Gastrocnemius medialis (tissue), 4 donors: ENCODE measurements at regions of chr10 and their contacts with region 1.

Region 1: GRCh38 chr10:68406815-68407548 is at the start of gene RUFY2:
- DNase-seq: peak; percentile 32 to 58
- ATAC-seq: peak; percentile 92 to 96
- H3K4me3 ChIP-seq: peak within 1 kb of the TSS; percentile 83 to 100 (median 96)
- H3K27ac ChIP-seq: peak within 1 kb of the TSS; percentile 87 to 95 (median 92)
- H3K4me1 ChIP-seq: peaks cover 3 to 11% of the 10 kb centered on the region in 2 donors
- H3K27me3 ChIP-seq: no peaks in the 10 kb centered on the region
- CTCF ChIP-seq: peak; percentile 45 to 99 (median 95)
- POLR2A ChIP-seq: peak; percentile 60 to 69
- total RNA-seq, gene RUFY2: 8.9 to 15.7 (median 11.7) TPM

Region 2: GRCh38 chr10:67764012-67764822 is 642.8 kb before region 1 on chr10:
- in situ Hi-C with region 1: no loop called
- intact Hi-C with region 1: loop called (anchors 10 kb)
- DNase-seq: peak; percentile 83 to 91
- ATAC-seq: peak; percentile 93 to 94
- H3K4me3 ChIP-seq: peak overlapping the region; percentile 67 to 99 (median 80)
- H3K27ac ChIP-seq: peak overlapping the region; percentile 89 to 99 (median 94)
- H3K4me1 ChIP-seq: no peaks in the 10 kb centered on the region
- H3K27me3 ChIP-seq: no peaks in the 10 kb centered on the region
- CTCF ChIP-seq: no peak
- POLR2A ChIP-seq: no peak

Region 3: DNA sequence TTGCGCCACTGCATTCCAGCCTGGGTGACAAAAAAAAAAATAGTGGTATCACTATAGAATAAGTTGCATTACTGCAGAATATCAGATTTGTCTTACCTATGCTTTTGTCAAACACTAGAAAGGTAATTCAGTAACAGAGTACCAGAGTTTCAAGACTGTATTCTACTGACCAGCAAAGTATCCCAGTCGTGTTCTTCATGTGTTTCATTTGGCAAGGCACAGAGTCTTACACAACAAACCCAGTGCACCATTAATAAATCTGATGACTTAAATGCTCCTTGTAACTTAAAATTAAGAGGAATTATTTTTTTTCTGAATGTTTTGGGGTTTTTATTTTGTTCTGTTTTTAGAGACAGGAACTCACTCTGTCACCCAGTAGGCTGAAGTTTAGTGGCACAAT is 39.9 kb before region 1 on chr10:
- in situ Hi-C with region 1: no loop called
- intact Hi-C with region 1: no loop called
- DNase-seq: no peak
- ATAC-seq: no peak
- H3K4me3 ChIP-seq: no peak overlapping the region
- H3K27ac ChIP-seq: no peak overlapping the region
- H3K4me1 ChIP-seq: no peaks in the 10 kb centered on the region
- H3K27me3 ChIP-seq: no peaks in the 10 kb centered on the region
- CTCF ChIP-seq: no peak
- POLR2A ChIP-seq: no peak